CD8-positive, alpha-beta T cell (primary cell): ENCODE measurements at regions of chr7 and their contacts with region 1.

Region 1: DNA sequence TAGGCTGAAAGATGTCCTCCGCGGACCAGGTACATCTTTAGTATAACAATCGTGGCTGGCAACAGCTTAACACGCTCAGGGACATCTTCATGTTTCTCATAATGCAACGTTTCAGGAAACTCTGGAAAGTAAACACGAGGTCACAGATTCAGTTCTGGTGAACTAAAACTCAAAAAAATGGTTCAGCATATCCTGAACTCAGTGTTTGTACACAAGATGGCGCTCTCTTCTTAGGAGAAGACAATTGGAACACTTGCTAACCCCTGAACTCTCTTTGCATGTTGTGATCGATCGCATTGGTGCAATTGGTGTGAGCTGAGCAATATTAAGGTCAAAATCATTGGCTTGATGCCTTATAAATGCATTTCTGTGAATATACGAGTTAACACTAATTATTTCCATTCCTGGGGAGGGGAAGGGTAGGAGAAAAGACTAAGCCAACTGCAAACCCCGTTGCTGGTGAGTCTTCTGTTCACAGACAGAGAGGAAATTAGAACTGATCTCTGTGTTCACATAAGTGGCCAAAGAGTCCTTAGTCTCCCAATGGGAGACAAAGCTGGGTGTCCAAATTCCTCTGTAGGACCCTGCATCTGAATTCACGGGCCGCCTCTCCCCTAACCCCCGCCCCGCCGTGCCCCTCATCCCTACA is 52.6 kb upstream of the FAM180A start:
- DNase-seq: peak in 5 of 9 experiments; percentile 4 to 77 (median 32)
- ATAC-seq: peak; percentile 51
- H3K4me3 ChIP-seq: no peak overlapping the region
- H3K4me3 Mint-ChIP-seq: no peak overlapping the region
- H3K27ac ChIP-seq: no peak overlapping the region
- H3K27ac Mint-ChIP-seq: no peak overlapping the region
- H3K4me1 ChIP-seq: no peaks in the 10 kb centered on the region
- H3K4me1 Mint-ChIP-seq: peaks cover 5% of the 10 kb centered on the region
- H3K27me3 ChIP-seq: no peaks in the 10 kb centered on the region
- H3K27me3 Mint-ChIP-seq: peaks cover 9% of the 10 kb centered on the region
- CTCF ChIP-seq: peak; percentile 73

Region 2: GRCh38 chr7:136000288-136000913 is 199.2 kb after region 1 on chr7:
- CTCF ChIA-PET with region 1: interaction called, 17 read pairs
- POLR2A ChIA-PET with region 1: no interaction called
- intact Hi-C with region 1: no loop called
- DNase-seq: no peak
- ATAC-seq: no peak
- H3K4me3 ChIP-seq: no peak overlapping the region
- H3K4me3 Mint-ChIP-seq: no peak overlapping the region
- H3K27ac ChIP-seq: no peak overlapping the region
- H3K27ac Mint-ChIP-seq: no peak overlapping the region
- H3K4me1 ChIP-seq: no peaks in the 10 kb centered on the region
- H3K4me1 Mint-ChIP-seq: no peaks in the 10 kb centered on the region
- H3K27me3 ChIP-seq: no peaks in the 10 kb centered on the region
- H3K27me3 Mint-ChIP-seq: no peaks in the 10 kb centered on the region
- CTCF ChIP-seq: no peak

Region 3: DNA sequence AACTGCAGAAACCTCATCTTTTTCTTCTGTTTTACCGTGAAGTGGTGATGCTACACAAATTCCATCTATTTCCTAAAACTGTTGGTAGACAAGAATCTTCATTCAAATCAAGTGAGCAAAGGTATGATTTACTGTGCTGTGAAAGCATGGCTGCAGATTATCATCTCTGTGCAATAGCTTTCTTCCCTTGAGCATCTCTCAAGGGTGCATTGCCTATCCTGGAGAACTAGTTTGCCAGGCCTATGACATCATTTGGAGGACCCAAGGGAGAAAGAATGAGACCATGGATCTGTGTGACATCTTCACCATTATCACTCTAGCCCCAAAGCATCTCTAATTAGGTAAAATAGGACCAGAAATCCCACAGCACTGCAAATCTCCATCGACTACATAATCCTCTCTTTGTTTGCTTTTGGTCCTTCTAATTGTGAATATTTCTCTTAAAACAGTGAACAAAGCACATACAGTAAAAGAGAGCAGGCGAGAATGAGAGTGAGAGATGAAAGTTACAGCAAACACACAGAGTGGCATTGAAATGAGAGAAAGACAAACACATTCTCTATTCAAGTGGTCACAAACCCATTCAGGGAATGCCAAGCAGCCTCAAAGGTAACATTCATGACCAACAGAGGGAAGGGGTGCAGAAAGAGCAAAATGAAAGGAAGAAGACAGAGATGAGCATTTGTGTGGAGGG is 1652.0 kb after region 1 on chr7:
- CTCF ChIA-PET with region 1: no interaction called
- POLR2A ChIA-PET with region 1: no interaction called
- intact Hi-C with region 1: loop called in 1 of 2 experiments (anchors 2 kb)
- DNase-seq: no peak
- ATAC-seq: no peak
- H3K4me3 ChIP-seq: no peak overlapping the region
- H3K4me3 Mint-ChIP-seq: no peak overlapping the region
- H3K27ac ChIP-seq: no peak overlapping the region
- H3K27ac Mint-ChIP-seq: no peak overlapping the region
- H3K4me1 ChIP-seq: no peaks in the 10 kb centered on the region
- H3K4me1 Mint-ChIP-seq: no peaks in the 10 kb centered on the region
- H3K27me3 ChIP-seq: no peaks in the 10 kb centered on the region
- H3K27me3 Mint-ChIP-seq: peaks cover 5% of the 10 kb centered on the region
- CTCF ChIP-seq: no peak